CD14-positive monocyte (primary cell): ENCODE measurements at regions of chr1 and their contacts with region 1.

Region 1: GRCh38 chr1:160098852-160099561 is 588 bp upstream of the IGSF8 start:
- DNase-seq: peak; percentile 91 to 93 (median 93)
- H3K4me3 ChIP-seq: peak overlapping the region; percentile 48 to 82 (median 52)
- H3K4me3 Mint-ChIP-seq: peak overlapping the region; percentile 80 to 86
- H3K27ac ChIP-seq: peak overlapping the region; percentile 81 to 87
- H3K27ac Mint-ChIP-seq: peak overlapping the region; percentile 87 to 96 (median 92)
- H3K4me1 ChIP-seq: peaks cover 66 to 72% of the 10 kb centered on the region in 2 donors
- H3K4me1 Mint-ChIP-seq: peaks cover 58% of the 10 kb centered on the region
- H3K27me3 ChIP-seq: no peaks in the 10 kb centered on the region
- H3K27me3 Mint-ChIP-seq: peaks cover 3 to 10% (median 4%) of the 10 kb centered on the region in 3 donors
- CTCF ChIP-seq: no peak

Region 2: DNA sequence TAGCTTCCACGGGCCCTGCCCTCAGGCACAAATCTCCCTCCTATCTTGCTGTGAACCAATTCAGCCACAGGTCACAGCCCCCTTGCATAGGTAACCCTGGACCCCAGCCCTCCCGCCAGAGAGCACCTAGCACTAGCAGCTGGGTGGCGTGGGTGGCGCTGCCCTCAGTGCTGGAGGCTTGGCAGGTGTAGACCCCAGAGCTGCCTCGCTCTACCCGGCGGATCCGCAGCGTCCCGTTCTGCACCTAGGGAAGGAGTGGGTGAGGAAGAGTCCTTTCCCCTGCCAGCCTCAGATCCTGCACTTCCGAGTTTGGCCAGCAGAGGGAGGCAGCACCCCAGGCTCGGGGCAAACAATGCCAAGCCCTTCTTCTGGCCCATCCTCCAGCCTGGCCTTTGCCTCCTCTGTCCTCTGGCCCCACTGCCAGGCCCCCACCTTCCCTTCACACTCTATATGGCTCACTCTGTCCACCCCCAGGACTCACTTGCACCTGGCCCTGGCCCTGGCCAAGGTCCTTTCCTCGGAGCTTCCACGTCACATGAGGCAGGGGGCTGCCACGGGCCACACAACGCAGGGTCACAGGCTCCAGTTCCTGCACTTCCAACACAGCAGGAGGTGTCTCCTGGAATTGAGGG is 162.6 kb before region 1 on chr1:
- intact Hi-C with region 1: loop called in 1 of 2 experiments (anchors 10 kb)
- DNase-seq: peak; percentile 65 to 72 (median 69)
- H3K4me3 ChIP-seq: peak overlapping the region in 1 of 3 experiments; percentile 63
- H3K4me3 Mint-ChIP-seq: no peak overlapping the region
- H3K27ac ChIP-seq: peak overlapping the region in 1 of 2 donors; percentile 43
- H3K27ac Mint-ChIP-seq: peak overlapping the region in 6 of 7 donors; percentile 17 to 75 (median 48)
- H3K4me1 ChIP-seq: peaks cover 40 to 50% of the 10 kb centered on the region in 2 donors
- H3K4me1 Mint-ChIP-seq: peaks cover 57% of the 10 kb centered on the region
- H3K27me3 ChIP-seq: no peaks in the 10 kb centered on the region
- H3K27me3 Mint-ChIP-seq: peaks cover 0 to 2% (median 2%) of the 10 kb centered on the region in 3 donors
- CTCF ChIP-seq: peak; percentile 99

Region 3: GRCh38 chr1:160177231-160177630 is 78.2 kb after region 1 on chr1:
- intact Hi-C with region 1: no loop called
- DNase-seq: no peak
- H3K4me3 ChIP-seq: no peak overlapping the region
- H3K4me3 Mint-ChIP-seq: no peak overlapping the region
- H3K27ac ChIP-seq: no peak overlapping the region
- H3K27ac Mint-ChIP-seq: no peak overlapping the region
- H3K4me1 ChIP-seq: no peaks in the 10 kb centered on the region
- H3K4me1 Mint-ChIP-seq: no peaks in the 10 kb centered on the region
- H3K27me3 ChIP-seq: no peaks in the 10 kb centered on the region
- H3K27me3 Mint-ChIP-seq: peaks cover 4 to 7% (median 5%) of the 10 kb centered on the region in 3 donors
- CTCF ChIP-seq: no peak

Region 4: DNA sequence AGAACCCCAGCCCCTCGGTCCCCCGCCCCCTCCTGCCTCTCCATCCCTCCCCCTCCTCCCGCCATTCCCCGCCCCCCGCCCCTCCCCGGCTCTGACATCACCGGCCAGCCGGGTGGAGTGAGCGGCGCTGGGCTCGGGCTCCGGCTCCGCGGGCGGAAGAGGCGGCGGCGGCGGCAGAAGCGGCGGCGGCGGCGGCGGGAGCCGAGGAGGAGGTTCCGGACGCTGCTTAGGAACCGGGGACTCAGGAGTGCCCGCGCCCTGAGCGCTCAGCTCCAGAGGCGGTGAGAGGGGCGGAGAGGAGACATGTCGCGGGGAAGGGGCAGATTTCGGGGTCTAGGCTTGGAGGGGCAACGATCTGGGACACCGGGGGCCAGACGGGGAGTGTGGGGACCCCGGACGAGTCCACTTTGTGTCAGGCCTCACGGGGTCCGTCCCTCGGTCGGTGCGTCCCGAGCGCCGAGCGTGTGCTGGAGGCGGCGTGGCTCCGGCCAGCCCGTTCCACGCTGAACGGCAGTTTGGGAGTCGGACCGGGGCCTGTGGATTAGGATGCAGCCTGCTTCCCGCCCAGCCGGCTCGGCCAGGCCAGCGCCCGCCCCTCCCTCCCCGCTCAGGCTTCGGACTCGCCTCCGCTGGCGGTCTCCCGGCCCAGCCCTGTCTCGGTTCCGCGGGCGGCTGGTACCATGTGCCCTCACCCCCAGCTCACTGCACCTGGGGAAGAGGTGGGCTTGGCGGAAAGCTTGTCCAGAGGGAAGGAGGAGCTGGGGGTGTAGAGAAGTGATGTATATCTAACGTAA is 106.4 kb after region 1 on chr1 and contains the start of gene PEA15:
- intact Hi-C with region 1: loop called in 1 of 2 experiments (anchors 5 kb)
- DNase-seq: peak; percentile 46 to 66 (median 59)
- H3K4me3 ChIP-seq: peak within 1 kb of the TSS; percentile 57 to 90 (median 86)
- H3K4me3 Mint-ChIP-seq: peak within 1 kb of the TSS; percentile 94 to 97
- H3K27ac ChIP-seq: peak within 1 kb of the TSS; percentile 92 to 95
- H3K27ac Mint-ChIP-seq: peak within 1 kb of the TSS; percentile 85 to 96 (median 94)
- H3K4me1 ChIP-seq: peaks cover 29 to 36% of the 10 kb centered on the region in 2 donors
- H3K4me1 Mint-ChIP-seq: peaks cover 43% of the 10 kb centered on the region
- H3K27me3 ChIP-seq: no peaks in the 10 kb centered on the region
- H3K27me3 Mint-ChIP-seq: peaks cover 0 to 3% (median 0%) of the 10 kb centered on the region in 3 donors
- CTCF ChIP-seq: no peak
- polyA plus RNA-seq, gene PEA15: 23.6 to 163 (median 38.1) TPM

Region 5: GRCh38 chr1:160284782-160285344 is 185.9 kb after region 1 on chr1 and contains the start of gene PEX19:
- intact Hi-C with region 1: loop called (anchors 5 to 10 kb)
- DNase-seq: peak; percentile 84 to 94 (median 89)
- H3K4me3 ChIP-seq: peak within 1 kb of the TSS; percentile 82 to 90 (median 83)
- H3K4me3 Mint-ChIP-seq: peak within 1 kb of the TSS; percentile 92 to 97
- H3K27ac ChIP-seq: peak within 1 kb of the TSS; percentile 69 to 82
- H3K27ac Mint-ChIP-seq: peak within 1 kb of the TSS; percentile 86 to 96 (median 94)
- H3K4me1 ChIP-seq: peaks cover 19 to 22% of the 10 kb centered on the region in 2 donors
- H3K4me1 Mint-ChIP-seq: peaks cover 20% of the 10 kb centered on the region
- H3K27me3 ChIP-seq: no peaks in the 10 kb centered on the region
- H3K27me3 Mint-ChIP-seq: peaks cover 0 to 7% (median 0%) of the 10 kb centered on the region in 3 donors
- CTCF ChIP-seq: no peak
- polyA plus RNA-seq, gene PEX19: 17.4 to 38.2 (median 37.4) TPM